T-cell (primary cell): ENCODE measurements at regions of chr7 and their contacts with region 1.

Region 1: GRCh38 chr7:47970761-47971160 is 8.7 kb downstream of the HUS1 start:
- DNase-seq: no peak
- ATAC-seq: no peak
- H3K4me3 ChIP-seq: no peak overlapping the region
- H3K4me3 Mint-ChIP-seq: no peak overlapping the region
- H3K27ac ChIP-seq: no peak overlapping the region
- H3K27ac Mint-ChIP-seq: peak overlapping the region in 1 of 2 donors; percentile 3
- H3K4me1 ChIP-seq: no peaks in the 10 kb centered on the region
- H3K4me1 Mint-ChIP-seq: peaks cover 36 to 43% (median 39%) of the 10 kb centered on the region in 3 donors
- H3K27me3 ChIP-seq: no peaks in the 10 kb centered on the region
- H3K27me3 Mint-ChIP-seq: no peaks in the 10 kb centered on the region

Region 2: GRCh38 chr7:49023345-49024328 is 1052.9 kb after region 1 on chr7:
- CTCF ChIA-PET with region 1: no interaction called
- POLR2A ChIA-PET with region 1: interaction called in 1 of 2 experiments, 10 read pairs
- DNase-seq: no peak
- ATAC-seq: no peak
- H3K4me3 ChIP-seq: no peak overlapping the region
- H3K4me3 Mint-ChIP-seq: no peak overlapping the region
- H3K27ac ChIP-seq: no peak overlapping the region
- H3K27ac Mint-ChIP-seq: no peak overlapping the region
- H3K4me1 ChIP-seq: no peaks in the 10 kb centered on the region
- H3K4me1 Mint-ChIP-seq: no peaks in the 10 kb centered on the region
- H3K27me3 ChIP-seq: no peaks in the 10 kb centered on the region
- H3K27me3 Mint-ChIP-seq: no peaks in the 10 kb centered on the region